Pancreas (tissue), 10 donors: ENCODE measurements at regions of chr9 and their contacts with region 1.

Region 1: DNA sequence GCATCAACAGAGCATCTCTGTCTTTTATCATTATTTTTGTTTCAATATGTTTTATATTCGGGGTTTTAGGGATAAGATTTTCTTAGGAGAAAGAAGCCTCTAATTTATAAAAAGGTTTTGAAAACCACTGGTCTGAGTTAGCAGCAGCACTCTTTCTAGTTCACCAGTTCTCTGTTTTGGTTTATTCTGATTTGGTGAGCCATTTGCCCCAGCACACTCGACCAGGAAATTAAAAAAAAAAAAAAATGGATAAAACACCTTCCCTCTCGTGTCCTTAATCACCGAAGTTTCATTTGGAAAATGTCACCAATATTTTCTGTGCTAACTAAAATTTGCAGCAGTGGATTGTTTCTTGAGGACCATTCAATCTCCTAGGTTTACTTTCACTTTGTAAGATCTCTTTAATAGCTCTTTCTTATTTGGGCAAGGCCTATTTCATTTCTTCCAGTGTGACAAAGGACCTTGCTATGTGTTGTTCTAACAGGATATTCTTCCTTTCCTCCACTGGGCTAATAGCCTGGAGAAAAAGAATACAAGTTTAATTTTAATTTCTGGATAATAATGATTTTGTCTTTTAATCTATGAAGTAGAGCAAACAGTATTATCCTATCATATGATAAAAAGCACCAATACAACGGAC is 57.8 kb upstream of the ANXA1 start:
- DNase-seq: no peak
- ATAC-seq: no peak
- H3K4me3 ChIP-seq: no peak overlapping the region
- H3K27ac ChIP-seq: no peak overlapping the region
- H3K4me1 ChIP-seq: no peaks in the 10 kb centered on the region
- H3K27me3 ChIP-seq: no peaks in the 10 kb centered on the region
- CTCF ChIP-seq: no peak

Region 2: DNA sequence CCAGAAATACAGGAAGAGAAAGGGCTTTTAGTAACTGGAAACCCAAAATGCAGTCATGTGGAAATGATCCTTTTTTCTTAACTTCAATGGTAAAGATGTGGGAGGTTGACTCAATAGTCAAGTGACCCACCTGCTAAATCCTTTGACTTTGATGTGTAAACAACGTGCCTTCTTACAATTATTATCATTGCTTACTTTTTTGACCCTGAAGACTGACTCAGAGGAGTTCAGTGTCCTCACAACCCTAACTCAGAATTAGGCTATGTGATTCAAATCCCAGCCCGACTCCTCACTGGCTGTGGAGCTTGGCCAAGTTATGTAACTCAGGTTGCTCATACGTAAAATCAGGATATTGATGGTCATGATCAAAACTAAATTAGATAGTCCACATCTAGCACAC is 85.7 kb after region 1 on chr9:
- intact Hi-C with region 1: loop called in 1 of 3 experiments (anchors 10 kb)
- DNase-seq: no peak
- ATAC-seq: peak in 1 of 4 donors; percentile 18
- H3K4me3 ChIP-seq: no peak overlapping the region
- H3K27ac ChIP-seq: no peak overlapping the region
- H3K4me1 ChIP-seq: no peaks in the 10 kb centered on the region
- H3K27me3 ChIP-seq: no peaks in the 10 kb centered on the region
- CTCF ChIP-seq: no peak